ENCODE measurements at regions of chr20 and their contacts with region 1.

Region 1: DNA sequence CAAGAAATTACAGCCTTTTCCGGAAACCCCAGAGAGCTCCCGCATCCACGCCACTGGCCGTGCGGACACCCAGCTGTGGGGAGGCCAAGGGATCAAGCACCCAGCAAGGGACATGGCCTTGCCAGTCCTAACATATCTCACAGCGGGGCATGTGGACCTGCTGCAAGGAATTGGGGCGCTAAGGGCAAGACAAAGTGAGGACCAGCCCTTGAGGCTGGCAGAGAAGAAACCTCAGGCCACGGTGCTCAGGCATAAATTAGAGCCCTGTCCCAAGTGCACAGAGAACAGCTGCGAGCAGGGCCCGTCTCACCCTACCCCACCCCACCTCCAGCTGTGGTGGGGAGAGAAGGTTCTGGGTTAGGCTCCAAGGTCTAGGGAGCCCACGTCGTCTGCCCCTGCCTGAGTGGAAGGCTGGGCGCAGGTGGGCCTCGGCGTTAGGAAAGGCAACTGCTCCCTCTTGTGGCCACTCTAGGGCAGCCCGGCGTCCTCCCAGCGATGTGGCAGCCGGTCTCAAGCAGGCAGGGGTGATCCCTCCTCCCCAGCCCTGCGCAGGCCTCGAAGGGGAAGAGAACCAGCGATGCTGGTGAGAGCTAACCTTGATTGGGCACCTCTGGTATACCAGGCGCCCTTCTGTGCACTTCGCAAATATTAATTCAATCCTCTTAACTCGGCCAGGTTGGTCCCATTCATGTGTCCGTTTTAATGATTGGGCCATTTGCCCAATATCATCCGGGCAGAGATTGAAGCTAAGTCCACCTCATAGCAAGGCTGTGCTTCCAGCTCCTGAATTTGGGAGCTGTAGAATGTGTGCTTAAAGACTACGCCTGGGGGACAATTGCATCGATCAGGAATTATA is 235.8 kb downstream of the NFATC2 start:
- DNase-seq: peak; percentile 49
- H3K4me3 Mint-ChIP-seq: no peak overlapping the region
- H3K27ac Mint-ChIP-seq: no peak overlapping the region
- H3K4me1 Mint-ChIP-seq: peaks cover 7% of the 10 kb centered on the region
- H3K27me3 Mint-ChIP-seq: peaks cover 23% of the 10 kb centered on the region

Region 2: DNA sequence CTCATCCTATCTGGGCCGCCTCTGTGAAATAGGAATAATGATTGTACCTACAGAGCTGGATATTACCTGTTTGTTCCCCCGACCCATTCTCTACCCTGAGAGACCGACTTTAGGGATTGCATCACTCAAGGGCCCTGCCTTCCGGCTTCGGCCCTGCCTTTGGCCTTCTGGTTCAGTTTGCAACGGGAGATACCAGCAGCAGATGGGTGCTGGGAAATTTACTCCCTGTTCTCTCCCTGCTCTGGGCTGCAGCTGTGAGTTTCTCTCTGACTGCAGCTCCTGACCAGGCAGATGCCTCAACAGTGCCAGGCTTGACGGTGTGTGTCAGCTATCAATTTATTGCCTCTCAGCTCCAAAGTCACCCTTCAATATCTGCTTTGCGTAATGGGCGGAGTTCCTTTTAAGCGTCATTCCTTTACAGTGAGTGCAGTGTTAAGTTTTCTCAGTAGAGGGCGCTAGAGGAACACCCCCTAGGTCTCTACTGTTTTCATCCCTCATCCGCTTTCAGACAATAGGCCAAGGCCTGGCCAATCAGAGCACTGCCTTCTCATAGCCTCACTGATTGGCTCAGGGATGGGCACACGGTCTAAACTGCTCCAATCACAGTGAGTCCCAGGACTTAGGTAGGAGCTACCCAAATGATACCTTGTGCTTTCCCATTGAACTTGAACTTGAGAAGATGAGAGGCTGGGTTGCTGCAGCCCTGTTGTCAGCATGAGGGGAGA is 313.8 kb before region 1 on chr20:
- intact Hi-C with region 1: loop called (anchors 1 kb)
- DNase-seq: peak; percentile 33
- H3K4me3 Mint-ChIP-seq: no peak overlapping the region
- H3K27ac Mint-ChIP-seq: no peak overlapping the region
- H3K4me1 Mint-ChIP-seq: peaks cover 6% of the 10 kb centered on the region
- H3K27me3 Mint-ChIP-seq: peaks cover 9% of the 10 kb centered on the region

Region 3: GRCh38 chr20:51220293-51220706 is 86.4 kb before region 1 on chr20:
- intact Hi-C with region 1: loop called (anchors 1 kb)
- DNase-seq: peak; percentile 33
- H3K4me3 Mint-ChIP-seq: no peak overlapping the region
- H3K27ac Mint-ChIP-seq: no peak overlapping the region
- H3K4me1 Mint-ChIP-seq: peaks cover 14% of the 10 kb centered on the region
- H3K27me3 Mint-ChIP-seq: peaks cover 24% of the 10 kb centered on the region